ENCODE measurements at regions of chr3 and their contacts with region 1.

Region 1: GRCh38 chr3:157136647-157137387 is 23.1 kb downstream of the CCNL1 start:
- DNase-seq: no peak
- ATAC-seq: no peak
- H3K4me3 ChIP-seq: no peak overlapping the region
- H3K4me3 Mint-ChIP-seq: peak overlapping the region in 2 of 10 donors; percentile 65 to 80
- H3K27ac ChIP-seq: peak overlapping the region; percentile 14
- H3K27ac Mint-ChIP-seq: peak overlapping the region in 7 of 9 donors; percentile 5 to 91 (median 78)
- H3K4me1 ChIP-seq: peaks cover 6 to 31% of the 10 kb centered on the region in 2 donors
- H3K4me1 Mint-ChIP-seq: peaks cover 3 to 65% (median 21%) of the 10 kb centered on the region in 7 donors
- H3K27me3 ChIP-seq: no peaks in the 10 kb centered on the region
- H3K27me3 Mint-ChIP-seq: no peaks in the 10 kb centered on the region

Region 2: GRCh38 chr3:155995525-155996351 is 1141.1 kb before region 1 on chr3:
- CTCF ChIA-PET with region 1: no interaction called
- POLR2A ChIA-PET with region 1: no interaction called
- intact Hi-C with region 1: loop called in 1 of 2 experiments (anchors 1 kb)
- DNase-seq: peak in 1 of 9 donors; percentile 6
- ATAC-seq: no peak
- H3K4me3 ChIP-seq: no peak overlapping the region
- H3K4me3 Mint-ChIP-seq: no peak overlapping the region
- H3K27ac ChIP-seq: no peak overlapping the region
- H3K27ac Mint-ChIP-seq: no peak overlapping the region
- H3K4me1 ChIP-seq: no peaks in the 10 kb centered on the region
- H3K4me1 Mint-ChIP-seq: peaks cover 0 to 2% (median 0%) of the 10 kb centered on the region in 7 donors
- H3K27me3 ChIP-seq: no peaks in the 10 kb centered on the region
- H3K27me3 Mint-ChIP-seq: peaks cover 0 to 18% (median 6%) of the 10 kb centered on the region in 5 donors

Region 3: DNA sequence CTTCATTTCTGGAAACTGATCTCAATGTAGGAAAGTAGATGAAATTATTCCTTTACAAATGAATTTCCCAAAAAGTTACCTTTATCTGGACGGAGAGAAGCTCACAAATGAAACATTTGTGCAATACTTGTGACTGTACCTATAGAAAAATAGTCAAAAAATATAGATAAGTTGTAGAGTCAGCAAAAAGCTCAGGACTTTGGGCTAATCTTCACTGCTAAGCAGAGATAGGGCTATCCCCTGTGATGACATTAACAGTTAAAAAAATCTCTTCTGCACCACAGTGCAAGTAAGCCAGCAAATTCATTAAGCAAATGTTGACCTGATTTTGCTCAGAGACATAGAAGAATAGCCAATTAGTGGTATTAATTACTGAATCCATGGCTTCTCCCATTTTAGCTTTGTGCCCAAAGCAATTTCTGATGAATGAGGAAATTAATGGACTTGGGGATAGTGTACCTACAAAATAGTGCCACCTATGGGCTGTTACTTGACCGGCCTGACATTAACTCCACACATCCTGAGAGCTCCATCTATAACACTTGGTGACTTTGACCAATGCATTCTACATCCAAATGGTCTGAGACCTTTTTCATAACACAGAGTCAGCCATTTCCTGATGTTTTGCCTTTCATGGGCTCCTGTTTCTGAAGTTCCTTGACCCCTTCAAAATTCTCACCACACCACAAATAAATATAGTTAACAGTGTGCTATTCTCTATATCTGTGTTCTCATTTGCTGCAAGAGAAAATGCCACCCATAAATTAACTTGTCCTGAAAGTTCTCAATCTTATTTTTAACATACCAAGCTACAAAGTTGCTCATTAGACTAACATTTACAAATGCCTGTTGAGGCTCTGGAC is 686.9 kb before region 1 on chr3:
- CTCF ChIA-PET with region 1: no interaction called
- POLR2A ChIA-PET with region 1: no interaction called
- intact Hi-C with region 1: loop called in 1 of 2 experiments (anchors 2 kb)
- DNase-seq: no peak
- ATAC-seq: no peak
- H3K4me3 ChIP-seq: no peak overlapping the region
- H3K4me3 Mint-ChIP-seq: no peak overlapping the region
- H3K27ac ChIP-seq: no peak overlapping the region
- H3K27ac Mint-ChIP-seq: no peak overlapping the region
- H3K4me1 ChIP-seq: no peaks in the 10 kb centered on the region
- H3K4me1 Mint-ChIP-seq: peaks cover 0 to 2% (median 0%) of the 10 kb centered on the region in 7 donors
- H3K27me3 ChIP-seq: no peaks in the 10 kb centered on the region
- H3K27me3 Mint-ChIP-seq: peaks cover 8 to 45% (median 9%) of the 10 kb centered on the region in 5 donors

Region 4: DNA sequence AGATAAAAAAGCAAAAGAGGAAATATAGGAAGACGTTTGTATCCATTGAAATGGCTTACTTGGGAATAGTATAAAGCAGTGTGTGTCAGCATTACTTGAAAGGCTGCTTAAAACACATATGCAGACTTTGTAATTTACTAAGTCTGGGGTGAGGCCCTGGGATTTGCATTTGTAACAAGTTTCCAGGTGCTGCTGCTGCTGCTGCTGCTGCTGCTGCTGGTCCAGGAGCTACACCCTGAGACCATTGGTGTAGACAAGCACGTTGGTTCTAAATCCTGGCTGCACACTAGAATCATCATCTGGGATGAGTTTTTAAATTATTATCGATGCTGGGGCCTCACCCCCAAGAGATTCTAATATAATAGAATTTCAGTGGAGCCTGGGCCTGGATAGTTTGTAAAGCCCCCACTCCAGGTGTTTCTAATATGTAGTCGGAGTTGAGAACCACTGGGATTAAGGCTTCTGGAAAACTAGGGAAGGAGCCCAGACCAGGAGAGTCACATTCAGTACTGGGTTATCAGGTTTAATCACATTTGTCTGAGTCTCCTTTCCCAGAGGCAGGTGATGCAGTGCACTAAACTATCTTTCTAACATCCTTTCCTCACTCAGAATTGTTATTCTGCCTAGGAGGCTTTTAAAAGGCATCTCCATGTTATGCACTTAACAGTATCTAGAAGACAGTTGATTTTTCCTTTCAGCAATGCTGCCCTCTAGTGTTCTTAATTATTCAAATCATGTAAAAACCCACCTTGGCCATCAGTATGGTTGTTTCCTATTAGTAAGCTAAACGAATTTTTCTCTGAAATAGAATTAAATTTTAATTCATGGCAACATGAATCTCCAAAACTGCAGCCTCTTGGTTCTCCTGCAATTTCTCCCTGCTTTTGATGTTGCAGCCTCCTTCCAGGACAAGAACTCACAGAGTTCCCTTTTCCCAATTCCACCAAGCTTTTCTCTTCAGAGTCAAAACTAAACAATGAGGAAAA is 627.3 kb before region 1 on chr3:
- CTCF ChIA-PET with region 1: interaction called, 3 read pairs
- POLR2A ChIA-PET with region 1: no interaction called
- intact Hi-C with region 1: loop called (anchors 1 to 2 kb)
- DNase-seq: peak in 7 of 9 donors; percentile 30 to 71 (median 62)
- ATAC-seq: peak; percentile 82
- H3K4me3 ChIP-seq: no peak overlapping the region
- H3K4me3 Mint-ChIP-seq: no peak overlapping the region
- H3K27ac ChIP-seq: no peak overlapping the region
- H3K27ac Mint-ChIP-seq: no peak overlapping the region
- H3K4me1 ChIP-seq: no peaks in the 10 kb centered on the region
- H3K4me1 Mint-ChIP-seq: peaks cover 0 to 21% (median 9%) of the 10 kb centered on the region in 7 donors
- H3K27me3 ChIP-seq: no peaks in the 10 kb centered on the region
- H3K27me3 Mint-ChIP-seq: peaks cover 0 to 40% (median 17%) of the 10 kb centered on the region in 5 donors

Region 5: DNA sequence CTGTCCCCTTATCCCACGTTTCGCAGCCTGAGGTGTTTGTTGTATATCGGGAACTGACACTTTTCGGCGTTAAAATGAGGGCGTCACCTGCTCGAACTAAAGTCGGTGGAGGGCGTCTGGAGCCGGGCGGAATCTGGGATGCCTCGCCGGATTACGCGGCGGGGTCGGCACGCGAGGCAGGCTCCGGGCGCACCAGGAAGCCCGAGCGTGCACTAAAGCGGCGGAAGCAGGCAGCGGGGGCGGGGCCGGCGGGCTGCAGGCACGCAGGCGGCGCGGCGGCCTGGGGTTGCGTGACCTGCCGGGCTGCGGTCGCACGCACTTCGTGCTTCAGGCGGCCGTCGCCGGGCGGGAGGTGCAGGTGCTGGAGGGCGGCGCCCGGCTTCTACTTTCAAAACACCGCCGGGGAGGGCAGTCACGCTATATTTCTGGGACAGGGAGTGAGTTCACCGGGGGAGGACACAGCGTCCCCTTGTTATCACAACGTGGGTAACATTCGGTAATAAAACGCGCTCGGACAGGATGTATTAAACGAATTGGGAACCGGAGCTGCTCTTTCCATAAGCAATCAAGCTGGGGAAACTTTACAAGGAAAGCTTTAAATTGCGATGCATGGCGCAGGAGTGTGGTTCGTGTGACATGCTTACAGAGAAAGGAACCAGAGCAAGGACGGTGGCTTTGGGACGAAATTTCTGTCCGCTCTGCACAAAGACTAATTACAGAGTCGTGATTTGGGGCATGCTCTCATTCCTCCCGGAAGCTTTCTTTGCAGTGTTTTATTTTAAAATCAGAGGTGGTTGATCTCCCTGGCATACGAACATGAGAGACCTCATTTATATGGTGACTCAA is 319.8 kb before region 1 on chr3:
- CTCF ChIA-PET with region 1: no interaction called
- POLR2A ChIA-PET with region 1: no interaction called
- intact Hi-C with region 1: loop called in 1 of 2 experiments (anchors 2 kb)
- DNase-seq: peak; percentile 68 to 90 (median 81)
- ATAC-seq: peak; percentile 89
- H3K4me3 ChIP-seq: peak overlapping the region; percentile 64
- H3K4me3 Mint-ChIP-seq: peak overlapping the region; percentile 87 to 97 (median 95)
- H3K27ac ChIP-seq: peak overlapping the region; percentile 67
- H3K27ac Mint-ChIP-seq: peak overlapping the region; percentile 90 to 99 (median 96)
- H3K4me1 ChIP-seq: peaks cover 8 to 10% of the 10 kb centered on the region in 2 donors
- H3K4me1 Mint-ChIP-seq: peaks cover 6 to 72% (median 29%) of the 10 kb centered on the region in 7 donors
- H3K27me3 ChIP-seq: no peaks in the 10 kb centered on the region
- H3K27me3 Mint-ChIP-seq: no peaks in the 10 kb centered on the region

Region 6: GRCh38 chr3:157088601-157089454 is 48.0 kb before region 1 on chr3:
- CTCF ChIA-PET with region 1: interaction called, 17 read pairs
- POLR2A ChIA-PET with region 1: interaction called, 49 read pairs
- intact Hi-C with region 1: no loop called
- DNase-seq: peak; percentile 90 to 97 (median 93)
- ATAC-seq: peak; percentile 95
- H3K4me3 ChIP-seq: peak overlapping the region; percentile 84
- H3K4me3 Mint-ChIP-seq: peak overlapping the region; percentile 81 to 89 (median 87)
- H3K27ac ChIP-seq: peak overlapping the region; percentile 83
- H3K27ac Mint-ChIP-seq: peak overlapping the region; percentile 92 to 98 (median 96)
- H3K4me1 ChIP-seq: peaks cover 11 to 30% of the 10 kb centered on the region in 2 donors
- H3K4me1 Mint-ChIP-seq: peaks cover 11 to 79% (median 23%) of the 10 kb centered on the region in 7 donors
- H3K27me3 ChIP-seq: no peaks in the 10 kb centered on the region
- H3K27me3 Mint-ChIP-seq: peaks cover 0 to 6% (median 0%) of the 10 kb centered on the region in 5 donors